ENCODE measurements at regions of chr2 and their contacts with region 1.

Region 1: DNA sequence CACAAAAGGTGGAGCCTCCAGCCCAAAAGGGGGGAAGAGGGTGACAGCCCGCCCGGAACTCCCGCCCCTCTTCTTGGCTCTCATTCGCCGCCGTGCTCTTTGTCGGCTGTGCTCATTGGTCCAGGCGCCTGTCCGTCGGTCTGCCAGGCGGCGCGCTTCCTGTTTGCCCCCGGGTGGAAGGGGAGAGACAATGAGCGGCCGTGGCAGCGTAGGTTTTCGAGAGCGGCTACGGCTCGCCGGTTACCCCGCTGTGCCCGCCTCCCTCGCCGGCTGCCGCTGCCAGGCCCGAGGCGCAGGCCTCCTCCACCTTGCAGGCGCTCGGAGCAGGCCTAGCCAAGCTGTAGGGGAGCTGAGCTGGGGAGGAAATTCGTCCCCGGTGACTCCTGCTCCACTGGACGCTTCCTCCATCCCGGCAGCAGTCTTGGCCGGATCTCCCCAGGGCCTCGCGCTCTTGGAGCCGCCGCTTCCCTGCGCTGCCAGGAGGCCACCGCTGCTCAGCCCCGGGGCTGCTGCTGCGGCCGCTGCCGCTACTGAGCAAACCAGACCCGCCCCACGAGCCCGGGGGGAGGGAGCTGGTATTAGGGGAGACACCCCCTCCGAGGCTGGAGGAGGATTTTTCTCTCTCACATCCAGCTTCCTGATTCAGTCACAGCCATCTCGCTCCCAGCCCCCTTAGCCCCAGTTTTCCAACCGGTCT is at the start of gene SP3:
- DNase-seq: peak; percentile 95
- H3K4me3 Mint-ChIP-seq: peak within 1 kb of the TSS; percentile 86
- H3K27ac Mint-ChIP-seq: peak within 1 kb of the TSS; percentile 92
- H3K4me1 Mint-ChIP-seq: peaks cover 32% of the 10 kb centered on the region
- H3K27me3 Mint-ChIP-seq: no peaks in the 10 kb centered on the region
- total RNA-seq, gene SP3: 104 and 105 TPM in 2 replicates

Region 2: GRCh38 chr2:173891315-173892037 is 74.0 kb before region 1 on chr2:
- intact Hi-C with region 1: no loop called
- DNase-seq: no peak
- H3K4me3 Mint-ChIP-seq: no peak overlapping the region
- H3K27ac Mint-ChIP-seq: no peak overlapping the region
- H3K4me1 Mint-ChIP-seq: peaks cover 15% of the 10 kb centered on the region
- H3K27me3 Mint-ChIP-seq: peaks cover 4% of the 10 kb centered on the region

Region 3: DNA sequence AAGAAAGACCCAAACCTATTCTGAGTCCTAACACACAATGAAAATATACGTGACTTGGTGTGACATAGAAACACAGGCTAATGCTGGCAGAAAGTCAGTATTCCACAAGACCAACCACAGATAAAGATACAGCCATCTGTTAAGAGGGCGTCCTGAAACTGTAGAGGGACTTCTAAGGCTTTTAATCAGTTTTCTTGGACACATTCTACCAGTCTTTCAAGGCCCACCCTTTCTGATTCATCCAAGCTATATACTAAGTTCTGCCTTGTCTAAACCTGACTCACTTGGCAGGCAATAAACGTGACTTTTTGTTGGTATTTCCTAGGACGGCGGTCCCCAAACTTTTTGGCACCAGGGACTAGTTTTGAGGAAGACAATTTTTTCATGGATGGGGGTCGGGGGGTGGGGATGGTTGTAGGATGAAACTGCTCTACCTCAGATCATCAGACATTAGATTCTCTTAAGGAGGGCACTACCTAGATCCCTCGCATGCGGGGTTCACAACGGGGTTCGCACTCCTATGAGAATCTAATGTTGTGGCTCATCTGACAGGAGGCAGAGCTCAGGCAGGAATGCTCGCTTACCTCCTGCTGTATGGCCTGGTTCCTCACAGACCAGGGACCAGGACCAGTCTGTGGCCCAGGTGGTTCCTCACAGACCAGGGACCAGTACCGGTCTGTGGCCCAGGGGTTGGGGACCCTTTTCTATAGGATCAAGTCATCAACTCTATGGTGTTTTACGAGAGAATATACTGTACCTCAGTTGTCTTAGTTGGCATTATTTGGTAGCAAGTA is 61.7 kb before region 1 on chr2:
- intact Hi-C with region 1: no loop called
- DNase-seq: no peak
- H3K4me3 Mint-ChIP-seq: no peak overlapping the region
- H3K27ac Mint-ChIP-seq: no peak overlapping the region
- H3K4me1 Mint-ChIP-seq: peaks cover 4% of the 10 kb centered on the region
- H3K27me3 Mint-ChIP-seq: no peaks in the 10 kb centered on the region

Region 4: DNA sequence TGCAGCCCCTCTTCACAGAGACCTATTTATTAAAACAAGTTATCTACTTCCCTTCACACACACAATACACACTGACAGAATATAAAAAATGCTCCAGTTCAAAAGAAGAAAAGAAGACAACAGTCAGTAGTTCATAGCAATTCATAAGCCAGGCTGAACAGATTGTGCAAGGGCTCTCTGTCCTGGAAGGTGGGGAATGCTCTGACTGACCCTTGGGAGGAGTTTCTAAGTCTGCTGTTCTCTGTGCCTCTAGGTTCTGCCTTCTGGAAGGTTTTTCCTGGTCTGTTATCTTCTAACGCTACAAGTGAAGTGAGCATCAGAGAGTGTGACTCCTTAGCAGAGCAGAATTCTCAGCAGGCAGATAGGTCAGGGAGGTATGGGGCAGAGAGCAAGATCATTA is 36.0 kb before region 1 on chr2:
- intact Hi-C with region 1: loop called (anchors 5 kb)
- DNase-seq: no peak
- H3K4me3 Mint-ChIP-seq: no peak overlapping the region
- H3K27ac Mint-ChIP-seq: no peak overlapping the region
- H3K4me1 Mint-ChIP-seq: peaks cover 13% of the 10 kb centered on the region
- H3K27me3 Mint-ChIP-seq: no peaks in the 10 kb centered on the region

Region 5: GRCh38 chr2:173978447-173978846 is 13.0 kb after region 1 on chr2:
- intact Hi-C with region 1: loop called (anchors 1 kb)
- DNase-seq: no peak
- H3K4me3 Mint-ChIP-seq: no peak overlapping the region
- H3K27ac Mint-ChIP-seq: peak overlapping the region; percentile 70
- H3K4me1 Mint-ChIP-seq: peaks cover 30% of the 10 kb centered on the region
- H3K27me3 Mint-ChIP-seq: no peaks in the 10 kb centered on the region

Region 6: GRCh38 chr2:174094542-174094941 is 129.1 kb after region 1 on chr2:
- intact Hi-C with region 1: loop called (anchors 10 kb)
- DNase-seq: no peak
- H3K4me3 Mint-ChIP-seq: no peak overlapping the region
- H3K27ac Mint-ChIP-seq: no peak overlapping the region
- H3K4me1 Mint-ChIP-seq: peaks cover 17% of the 10 kb centered on the region
- H3K27me3 Mint-ChIP-seq: no peaks in the 10 kb centered on the region

Region 7: GRCh38 chr2:174395284-174395968 is 429.9 kb after region 1 on chr2 and contains the start of gene SCRN3:
- intact Hi-C with region 1: loop called (anchors 5 kb)
- DNase-seq: peak; percentile 70
- H3K4me3 Mint-ChIP-seq: peak within 1 kb of the TSS; percentile 99
- H3K27ac Mint-ChIP-seq: peak within 1 kb of the TSS; percentile 99
- H3K4me1 Mint-ChIP-seq: peaks cover 27% of the 10 kb centered on the region
- H3K27me3 Mint-ChIP-seq: no peaks in the 10 kb centered on the region
- total RNA-seq, gene SCRN3: 17.3 and 17.4 TPM in 2 replicates

Region 8: DNA sequence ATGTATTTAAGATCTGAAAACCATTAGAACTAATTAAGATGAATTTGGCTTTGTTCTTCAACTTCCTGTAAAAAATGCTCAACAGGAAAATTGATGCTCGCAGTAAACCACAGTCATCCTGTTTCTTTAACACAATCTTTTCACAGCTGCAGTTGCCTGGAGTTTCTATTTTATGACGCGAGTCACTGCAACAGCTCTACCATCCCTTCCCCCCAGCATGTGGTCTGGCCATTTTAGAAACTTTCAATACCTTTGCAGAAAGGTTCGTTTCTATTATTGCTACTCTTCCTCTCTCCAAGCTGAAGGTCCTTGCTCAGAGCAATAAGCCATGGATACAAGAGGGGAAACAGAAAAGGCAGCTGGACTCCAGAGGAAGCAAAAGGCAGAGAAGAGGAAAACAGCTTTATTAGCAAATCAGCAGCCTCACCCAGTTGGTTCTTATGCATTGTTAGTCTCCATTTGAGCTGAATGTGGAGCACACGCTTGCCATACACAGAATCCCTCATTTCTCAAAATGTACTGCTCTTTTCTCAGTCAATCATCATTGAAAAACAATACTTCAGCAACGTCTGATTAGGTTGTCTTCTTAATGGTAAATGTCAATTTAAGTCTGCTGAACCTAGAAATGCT is 628.2 kb after region 1 on chr2:
- intact Hi-C with region 1: loop called (anchors 10 kb)
- DNase-seq: peak; percentile 67
- H3K4me3 Mint-ChIP-seq: peak overlapping the region; percentile 86
- H3K27ac Mint-ChIP-seq: peak overlapping the region; percentile 99
- H3K4me1 Mint-ChIP-seq: peaks cover 58% of the 10 kb centered on the region
- H3K27me3 Mint-ChIP-seq: no peaks in the 10 kb centered on the region